ENCODE measurements at regions of chr14 and their contacts with region 1.

Region 1: DNA sequence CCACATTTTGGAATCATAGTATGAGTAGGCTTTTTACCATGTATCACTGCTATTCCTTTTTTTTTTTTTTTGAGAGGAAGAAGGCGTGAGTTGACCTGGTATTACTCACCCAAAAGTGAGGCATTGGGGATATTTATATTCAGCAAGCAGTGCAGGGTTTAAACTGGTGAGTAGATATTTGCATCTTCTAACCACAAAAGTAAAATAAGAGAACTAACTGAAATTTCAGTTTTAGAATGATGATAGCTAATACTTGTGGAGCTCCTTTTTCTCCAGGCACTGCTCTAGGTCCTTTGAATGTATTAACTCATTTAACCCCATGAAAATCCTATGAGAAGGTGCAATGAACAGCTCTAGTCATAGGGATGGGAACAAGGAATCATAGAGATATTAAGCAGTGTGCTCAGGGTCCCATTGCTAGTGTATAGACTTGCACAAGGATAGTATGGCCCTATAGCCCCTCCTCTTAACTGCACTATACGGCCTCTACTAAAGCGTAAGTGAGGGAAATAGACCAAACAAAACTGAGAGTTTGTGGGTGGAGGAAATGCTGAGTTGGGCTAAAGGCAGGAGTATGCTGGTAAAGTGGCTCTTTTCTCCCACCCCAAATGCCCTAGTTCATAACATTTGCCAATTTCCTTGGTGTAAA is 104.3 kb upstream of the MAX start:
- DNase-seq: peak; percentile 58
- H3K4me3 ChIP-seq: no peak overlapping the region
- H3K27ac ChIP-seq: no peak overlapping the region
- H3K27me3 ChIP-seq: no peaks in the 10 kb centered on the region
- CTCF ChIP-seq: no peak

Region 2: DNA sequence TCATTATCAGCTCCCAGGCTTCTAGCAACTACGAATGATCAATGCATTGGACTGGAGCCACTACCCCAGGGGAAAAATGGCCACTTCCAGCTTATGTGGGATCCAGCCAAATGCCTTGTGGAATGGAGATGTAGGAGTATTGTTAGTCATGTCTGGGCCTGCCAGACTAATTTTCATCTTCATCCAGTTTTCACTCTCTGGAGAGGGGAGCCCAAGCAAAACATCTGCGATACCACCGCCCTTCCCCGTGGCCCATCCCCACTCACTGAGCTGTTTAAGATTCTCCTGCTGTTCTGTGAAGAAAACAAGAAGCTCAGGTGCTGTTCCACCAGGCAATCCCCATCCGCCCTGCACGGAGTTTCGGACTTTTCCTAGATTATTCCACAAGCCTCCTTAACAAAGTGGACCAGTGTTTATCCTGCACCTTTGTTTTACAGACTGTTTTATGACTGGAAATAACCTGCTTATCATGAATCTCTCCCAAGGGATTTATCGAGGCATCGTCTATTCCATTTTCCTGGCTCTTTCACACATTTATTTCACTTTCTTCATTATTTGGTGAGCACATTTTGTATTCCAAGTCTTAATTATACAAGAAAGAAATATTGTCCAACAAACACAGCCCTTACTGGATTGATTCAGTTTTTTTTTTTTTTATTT is 68.8 kb before region 1 on chr14:
- CTCF ChIA-PET with region 1: no interaction called
- POLR2A ChIA-PET with region 1: no interaction called
- DNase-seq: no peak
- H3K4me3 ChIP-seq: no peak overlapping the region
- H3K27ac ChIP-seq: no peak overlapping the region
- H3K27me3 ChIP-seq: peaks cover 3% of the 10 kb centered on the region
- CTCF ChIP-seq: no peak

Region 3: GRCh38 chr14:65153101-65153500 is 53.5 kb before region 1 on chr14:
- CTCF ChIA-PET with region 1: no interaction called
- POLR2A ChIA-PET with region 1: no interaction called
- DNase-seq: no peak
- H3K4me3 ChIP-seq: no peak overlapping the region
- H3K27ac ChIP-seq: no peak overlapping the region
- H3K27me3 ChIP-seq: peaks cover 14% of the 10 kb centered on the region
- CTCF ChIP-seq: no peak

Region 4: GRCh38 chr14:65222440-65222858 is 15.9 kb after region 1 on chr14:
- CTCF ChIA-PET with region 1: interaction called, 10 read pairs
- POLR2A ChIA-PET with region 1: no interaction called
- DNase-seq: no peak
- H3K4me3 ChIP-seq: no peak overlapping the region
- H3K27ac ChIP-seq: no peak overlapping the region
- H3K27me3 ChIP-seq: no peaks in the 10 kb centered on the region
- CTCF ChIP-seq: peak; percentile 86

Region 5: GRCh38 chr14:65318636-65319506 is 112.3 kb after region 1 on chr14:
- CTCF ChIA-PET with region 1: no interaction called
- POLR2A ChIA-PET with region 1: interaction called, 11 read pairs
- DNase-seq: no peak
- H3K4me3 ChIP-seq: no peak overlapping the region
- H3K27ac ChIP-seq: no peak overlapping the region
- H3K27me3 ChIP-seq: no peaks in the 10 kb centered on the region
- CTCF ChIP-seq: no peak

Region 6: DNA sequence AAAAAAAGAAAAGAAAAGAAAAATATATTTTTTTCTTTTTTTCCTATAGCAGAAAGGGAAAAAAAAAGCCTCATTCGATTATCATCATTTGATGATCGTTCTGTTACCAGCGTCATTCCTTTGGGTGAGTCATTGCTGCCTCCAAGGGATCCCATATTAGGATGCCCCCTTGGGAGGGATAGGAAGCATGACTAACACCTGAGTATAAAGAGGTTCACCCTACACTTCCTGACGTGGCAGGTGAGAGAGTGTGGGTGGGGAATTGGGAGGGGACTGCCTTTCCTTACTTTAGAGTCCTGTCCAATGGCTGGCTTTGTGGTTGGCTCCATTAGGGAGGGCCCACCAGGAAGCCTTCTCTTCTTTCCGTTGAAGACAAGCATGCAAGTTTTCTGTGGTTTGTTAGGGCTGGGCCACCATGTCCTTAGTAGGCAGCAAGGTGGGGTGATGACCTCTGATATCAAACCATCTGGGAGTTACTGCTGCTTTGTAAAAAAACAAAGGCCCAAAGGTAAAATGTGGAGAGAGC is 149.8 kb after region 1 on chr14:
- CTCF ChIA-PET with region 1: no interaction called
- POLR2A ChIA-PET with region 1: no interaction called
- DNase-seq: peak; percentile 53
- H3K4me3 ChIP-seq: no peak overlapping the region
- H3K27ac ChIP-seq: no peak overlapping the region
- H3K27me3 ChIP-seq: no peaks in the 10 kb centered on the region
- CTCF ChIP-seq: no peak

Measured in AG04450 (cell line).